ENCODE measurements at regions of chr11 and their contacts with region 1.

Region 1: DNA sequence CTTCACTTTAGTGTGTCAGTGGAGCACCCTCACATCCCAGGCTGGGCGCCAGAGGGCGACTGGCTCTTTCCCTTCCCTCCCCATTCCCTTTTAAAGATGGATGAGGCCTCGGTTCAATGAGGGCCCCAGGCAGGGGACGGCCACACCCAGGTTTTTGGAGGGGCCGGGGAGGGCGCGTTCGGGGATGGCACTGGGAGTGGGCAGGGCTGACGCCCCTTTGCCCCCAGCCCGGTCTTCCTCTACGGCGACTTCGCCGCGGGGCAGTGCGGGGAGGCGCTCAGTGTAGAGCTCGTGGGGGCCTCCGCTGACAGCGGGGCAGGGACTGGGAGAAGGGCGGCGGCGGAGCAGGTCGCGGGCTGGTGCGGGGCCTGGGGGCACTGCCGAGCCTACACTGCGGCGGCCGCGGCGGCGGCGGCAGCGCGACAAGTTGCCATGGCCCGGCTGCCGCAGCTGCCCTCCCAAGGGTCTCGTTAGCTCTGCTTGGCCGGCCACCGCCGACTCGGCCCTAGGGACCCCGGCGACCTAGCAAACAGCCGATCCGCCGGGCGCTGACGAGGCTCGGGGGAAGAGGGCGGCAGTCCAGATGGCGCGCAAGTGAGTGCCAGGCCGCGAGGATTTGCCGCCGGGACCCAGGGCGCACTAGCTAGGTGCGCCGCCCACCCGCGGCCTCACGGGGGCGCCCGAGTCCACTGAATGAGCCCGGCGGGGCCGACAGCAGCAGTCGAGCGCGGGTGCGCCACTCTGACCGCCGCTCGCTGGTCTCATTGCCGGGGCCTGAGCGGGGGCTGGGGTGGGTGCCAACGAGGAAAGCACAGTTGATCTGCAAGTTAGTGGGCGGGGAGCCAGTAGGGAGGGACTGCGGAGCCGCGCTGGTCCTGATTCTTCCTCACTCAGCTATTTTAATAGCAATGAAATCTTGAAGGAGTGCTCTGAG is 92.7 kb downstream of the RRM1 start:
- DNase-seq: peak in 1 of 2 experiments; percentile 64
- H3K4me3 ChIP-seq: peak overlapping the region; percentile 39; the same call in 1 of the 2 replicates
- H3K27ac ChIP-seq: no peak overlapping the region
- H3K4me1 ChIP-seq: no peaks in the 10 kb centered on the region
- H3K27me3 ChIP-seq: 0 out of 2 replicates have a peak, but pooled peaks cover 3% of the 10 kb centered on the region
- CTCF ChIP-seq: peak; percentile 84

Region 2: GRCh38 chr11:4167758-4168157 is 19.6 kb before region 1 on chr11:
- CTCF ChIA-PET with region 1: no interaction called
- POLR2A ChIA-PET with region 1: no interaction called
- intact Hi-C with region 1: no loop called
- DNase-seq: no peak
- H3K4me3 ChIP-seq: no peak overlapping the region
- H3K27ac ChIP-seq: no peak overlapping the region
- H3K4me1 ChIP-seq: no peaks in the 10 kb centered on the region
- H3K27me3 ChIP-seq: no peaks in the 10 kb centered on the region
- CTCF ChIP-seq: no peak

Region 3: GRCh38 chr11:4493480-4493818 is 306.1 kb after region 1 on chr11:
- CTCF ChIA-PET with region 1: no interaction called
- POLR2A ChIA-PET with region 1: no interaction called
- intact Hi-C with region 1: loop called (anchors 1 kb)
- DNase-seq: no peak
- H3K4me3 ChIP-seq: no peak overlapping the region
- H3K27ac ChIP-seq: no peak overlapping the region
- H3K4me1 ChIP-seq: no peaks in the 10 kb centered on the region
- H3K27me3 ChIP-seq: no peaks in the 10 kb centered on the region; the same call in 1 of the 2 replicates
- CTCF ChIP-seq: no peak; the same call in 1 of the 2 replicates

Region 4: GRCh38 chr11:4539603-4540219 is 352.4 kb after region 1 on chr11:
- CTCF ChIA-PET with region 1: interaction called, 3 read pairs
- POLR2A ChIA-PET with region 1: no interaction called
- intact Hi-C with region 1: loop called (anchors 1 kb)
- DNase-seq: peak in 1 of 2 experiments; percentile 1
- H3K4me3 ChIP-seq: no peak overlapping the region
- H3K27ac ChIP-seq: no peak overlapping the region
- H3K4me1 ChIP-seq: no peaks in the 10 kb centered on the region
- H3K27me3 ChIP-seq: no peaks in the 10 kb centered on the region
- CTCF ChIP-seq: peak; percentile 61

Region 5: DNA sequence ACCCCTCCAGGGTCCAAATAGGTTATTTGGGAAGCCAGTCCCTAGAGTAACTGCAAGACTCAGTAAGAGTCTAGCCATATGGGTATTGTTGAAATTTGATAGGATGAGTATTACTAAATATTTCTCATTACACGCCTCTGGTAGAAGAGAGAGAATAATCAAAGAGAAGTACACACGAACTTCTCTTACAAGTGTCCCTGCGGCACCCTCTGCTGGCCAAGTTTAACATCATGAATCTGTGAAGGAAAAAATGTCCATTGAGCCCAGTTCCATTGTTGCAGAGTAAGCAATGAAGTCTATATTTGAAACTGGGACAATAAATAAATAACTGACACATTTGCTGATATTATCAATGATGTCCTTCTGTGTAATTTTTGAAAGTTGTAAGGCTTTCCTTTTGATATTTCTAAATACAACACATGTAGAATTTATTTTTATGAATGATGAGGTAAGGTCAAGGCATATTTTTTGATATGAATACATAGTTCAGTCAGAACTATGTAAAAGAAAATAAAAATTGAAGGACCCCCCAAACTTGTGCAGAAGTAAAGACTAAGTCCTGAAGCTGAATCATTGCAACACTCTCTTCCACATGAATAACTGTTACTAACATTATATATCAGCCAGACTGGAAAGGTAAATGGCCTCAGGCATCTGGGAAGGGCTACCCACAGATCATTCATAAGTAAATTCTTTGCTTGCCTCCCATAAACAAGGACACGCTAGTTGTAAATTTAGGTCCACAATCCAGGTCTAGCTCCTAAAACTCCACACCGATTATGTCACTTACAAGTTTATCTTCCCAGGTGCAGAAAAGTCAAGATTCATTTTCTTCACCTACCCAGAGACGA is 817.3 kb after region 1 on chr11:
- CTCF ChIA-PET with region 1: no interaction called
- POLR2A ChIA-PET with region 1: no interaction called
- intact Hi-C with region 1: loop called (anchors 10 kb)
- DNase-seq: peak in 1 of 2 experiments; percentile 6
- H3K4me3 ChIP-seq: no peak overlapping the region
- H3K27ac ChIP-seq: no peak overlapping the region
- H3K4me1 ChIP-seq: no peaks in the 10 kb centered on the region
- H3K27me3 ChIP-seq: no peaks in the 10 kb centered on the region
- CTCF ChIP-seq: peak; percentile 61